B cell (primary cell): ENCODE measurements at regions of chr4 and their contacts with region 1.

Region 1: DNA sequence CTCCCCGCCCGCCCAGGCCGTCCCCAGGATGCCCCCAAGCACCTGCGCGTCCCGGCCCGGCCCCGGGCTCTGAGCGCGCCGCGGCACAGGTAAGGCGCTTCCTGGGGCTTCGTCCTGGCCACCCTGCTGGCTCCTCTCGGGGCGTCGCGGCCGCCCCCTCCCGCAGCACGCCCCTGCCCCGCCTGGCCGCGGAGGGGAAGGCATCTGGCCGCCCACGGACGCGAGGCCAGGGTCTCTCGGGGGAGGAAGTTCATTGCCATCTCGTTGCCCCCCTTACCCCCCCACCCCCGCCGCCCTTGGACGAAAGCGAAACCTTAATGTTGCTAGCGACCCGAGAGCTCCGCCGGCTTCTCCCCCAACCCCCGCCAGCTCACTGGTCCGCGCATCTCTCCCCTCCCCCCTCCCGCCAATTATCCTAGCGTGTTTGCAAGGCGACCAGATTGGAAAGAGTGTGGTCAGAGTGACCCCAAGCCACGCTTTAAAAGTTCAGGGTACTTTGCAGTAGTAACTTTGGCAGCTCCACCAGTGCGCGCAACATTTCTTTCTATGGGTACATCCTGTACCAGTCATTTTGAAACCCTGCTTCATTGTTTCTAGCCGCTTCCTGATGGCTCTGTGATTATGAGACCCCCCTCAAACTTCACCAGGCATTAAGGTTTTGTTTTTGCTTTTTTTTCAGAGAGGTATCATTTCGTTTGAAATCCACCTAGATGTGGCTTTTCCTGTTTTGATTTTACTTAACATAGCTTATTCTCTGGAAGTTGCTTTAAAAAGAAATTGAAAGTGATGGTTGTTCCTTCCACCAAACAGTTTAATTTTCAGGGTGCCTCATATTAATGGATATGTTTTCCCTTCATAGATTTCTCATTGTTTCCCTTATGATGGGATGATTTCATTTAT is 626 bp downstream of the TBC1D1 start:
- DNase-seq: peak; percentile 85
- ATAC-seq: peak; percentile 52
- H3K4me3 ChIP-seq: peak overlapping the region; percentile 72 to 96 (median 72)
- H3K4me3 Mint-ChIP-seq: peak overlapping the region; percentile 91
- H3K27ac ChIP-seq: peak overlapping the region; percentile 92 to 95
- H3K27ac Mint-ChIP-seq: peak overlapping the region; percentile 98
- H3K4me1 ChIP-seq: peaks cover 49 to 50% of the 10 kb centered on the region in 2 donors
- H3K4me1 Mint-ChIP-seq: peaks cover 62% of the 10 kb centered on the region
- H3K27me3 ChIP-seq: no peaks in the 10 kb centered on the region
- H3K27me3 Mint-ChIP-seq: no peaks in the 10 kb centered on the region
- CTCF ChIP-seq: no peak

Region 2: GRCh38 chr4:37686373-37687193 is 204.9 kb before region 1 on chr4 and contains the start of gene RELL1:
- CTCF ChIA-PET with region 1: no interaction called
- POLR2A ChIA-PET with region 1: no interaction called
- intact Hi-C with region 1: loop called (anchors 1 kb)
- DNase-seq: peak; percentile 96
- ATAC-seq: peak; percentile 85
- H3K4me3 ChIP-seq: peak within 1 kb of the TSS; percentile 66 to 86 (median 81)
- H3K4me3 Mint-ChIP-seq: peak within 1 kb of the TSS; percentile 92
- H3K27ac ChIP-seq: peak within 1 kb of the TSS; percentile 45 to 70
- H3K27ac Mint-ChIP-seq: peak within 1 kb of the TSS; percentile 89
- H3K4me1 ChIP-seq: peaks cover 31% of the 10 kb centered on the region in 2 donors
- H3K4me1 Mint-ChIP-seq: peaks cover 31% of the 10 kb centered on the region
- H3K27me3 ChIP-seq: peaks cover 0 to 12% (median 4%) of the 10 kb centered on the region in 4 experiments
- H3K27me3 Mint-ChIP-seq: peaks cover 12% of the 10 kb centered on the region
- CTCF ChIP-seq: no peak
- total RNA-seq, gene RELL1: 2.7 and 3.2 TPM in 2 replicates

Region 3: GRCh38 chr4:37802068-37802666 is 89.3 kb before region 1 on chr4:
- CTCF ChIA-PET with region 1: interaction called, 8 read pairs
- POLR2A ChIA-PET with region 1: no interaction called
- intact Hi-C with region 1: loop called (anchors 1 kb)
- DNase-seq: no peak
- ATAC-seq: no peak
- H3K4me3 ChIP-seq: no peak overlapping the region
- H3K4me3 Mint-ChIP-seq: no peak overlapping the region
- H3K27ac ChIP-seq: no peak overlapping the region
- H3K27ac Mint-ChIP-seq: no peak overlapping the region
- H3K4me1 ChIP-seq: no peaks in the 10 kb centered on the region
- H3K4me1 Mint-ChIP-seq: peaks cover 3% of the 10 kb centered on the region
- H3K27me3 ChIP-seq: no peaks in the 10 kb centered on the region
- H3K27me3 Mint-ChIP-seq: peaks cover 6% of the 10 kb centered on the region
- CTCF ChIP-seq: no peak

Region 4: DNA sequence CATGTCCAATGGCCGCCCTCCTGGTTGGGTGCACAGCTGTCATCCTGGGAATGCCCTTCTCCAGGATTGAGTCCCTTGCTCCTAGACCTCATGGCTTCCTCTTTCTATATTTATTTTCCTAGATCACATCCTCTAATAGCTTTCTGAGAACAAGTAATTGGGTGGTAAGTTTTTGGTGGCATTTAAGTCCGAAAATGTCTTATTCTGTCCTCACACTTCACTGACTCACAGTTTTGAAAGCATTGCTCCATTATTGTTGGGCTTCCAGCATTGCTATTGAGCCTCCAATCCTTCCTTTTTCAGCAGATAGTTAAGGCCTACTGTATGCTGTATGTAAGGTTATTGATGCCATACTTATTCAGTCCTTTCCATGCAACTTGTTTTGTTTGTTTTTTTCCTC is 39.1 kb before region 1 on chr4:
- CTCF ChIA-PET with region 1: interaction called, 3 read pairs
- POLR2A ChIA-PET with region 1: no interaction called
- intact Hi-C with region 1: loop called (anchors 5 kb)
- DNase-seq: no peak
- ATAC-seq: no peak
- H3K4me3 ChIP-seq: no peak overlapping the region
- H3K4me3 Mint-ChIP-seq: no peak overlapping the region
- H3K27ac ChIP-seq: no peak overlapping the region
- H3K27ac Mint-ChIP-seq: no peak overlapping the region
- H3K4me1 ChIP-seq: peaks cover 6 to 10% of the 10 kb centered on the region in 2 donors
- H3K4me1 Mint-ChIP-seq: peaks cover 8% of the 10 kb centered on the region
- H3K27me3 ChIP-seq: no peaks in the 10 kb centered on the region
- H3K27me3 Mint-ChIP-seq: no peaks in the 10 kb centered on the region
- CTCF ChIP-seq: no peak

Region 5: DNA sequence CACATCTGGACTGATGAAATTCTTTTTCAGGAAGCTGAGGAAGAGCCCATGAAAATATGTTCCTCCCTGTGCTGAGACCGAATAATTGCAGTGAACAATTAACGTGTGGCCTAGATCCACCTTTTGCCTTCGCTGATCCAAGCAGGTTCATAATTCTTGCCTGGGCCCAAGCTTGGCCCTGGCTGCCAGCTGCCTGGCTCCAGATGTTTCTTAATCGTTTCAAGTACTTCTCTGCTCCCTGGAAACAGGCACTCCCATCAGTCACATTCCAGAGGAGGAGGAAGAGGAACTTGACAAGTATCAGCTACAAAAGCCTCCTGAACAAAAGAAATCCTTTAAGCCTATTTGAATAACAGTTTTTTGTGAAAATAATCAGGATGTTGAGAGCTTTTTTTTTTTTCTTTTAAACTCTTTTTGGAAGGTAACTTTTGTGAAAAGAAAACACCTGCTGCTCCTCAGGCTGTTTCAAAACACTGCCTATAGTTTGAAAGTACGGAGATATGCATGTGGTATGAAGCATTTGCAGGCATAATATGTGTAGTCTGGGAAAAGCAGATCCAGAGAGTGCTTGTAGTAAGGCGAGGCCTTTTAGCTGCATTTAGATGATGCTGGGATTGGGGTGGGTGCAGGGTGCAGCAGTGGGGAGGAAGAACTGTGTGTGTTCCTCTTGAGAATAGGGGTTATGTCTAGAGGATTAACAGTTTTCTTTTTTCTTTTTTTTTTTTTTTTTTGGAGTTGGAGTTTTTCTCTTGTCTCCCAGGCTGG is 223.1 kb after region 1 on chr4:
- CTCF ChIA-PET with region 1: no interaction called
- POLR2A ChIA-PET with region 1: no interaction called
- intact Hi-C with region 1: no loop called
- DNase-seq: no peak
- ATAC-seq: no peak
- H3K4me3 ChIP-seq: no peak overlapping the region
- H3K4me3 Mint-ChIP-seq: no peak overlapping the region
- H3K27ac ChIP-seq: no peak overlapping the region
- H3K27ac Mint-ChIP-seq: no peak overlapping the region
- H3K4me1 ChIP-seq: no peaks in the 10 kb centered on the region
- H3K4me1 Mint-ChIP-seq: no peaks in the 10 kb centered on the region
- H3K27me3 ChIP-seq: no peaks in the 10 kb centered on the region
- H3K27me3 Mint-ChIP-seq: no peaks in the 10 kb centered on the region
- CTCF ChIP-seq: no peak